BJ (cell line): ENCODE measurements at regions of chr1 and their contacts with region 1.

Region 1: DNA sequence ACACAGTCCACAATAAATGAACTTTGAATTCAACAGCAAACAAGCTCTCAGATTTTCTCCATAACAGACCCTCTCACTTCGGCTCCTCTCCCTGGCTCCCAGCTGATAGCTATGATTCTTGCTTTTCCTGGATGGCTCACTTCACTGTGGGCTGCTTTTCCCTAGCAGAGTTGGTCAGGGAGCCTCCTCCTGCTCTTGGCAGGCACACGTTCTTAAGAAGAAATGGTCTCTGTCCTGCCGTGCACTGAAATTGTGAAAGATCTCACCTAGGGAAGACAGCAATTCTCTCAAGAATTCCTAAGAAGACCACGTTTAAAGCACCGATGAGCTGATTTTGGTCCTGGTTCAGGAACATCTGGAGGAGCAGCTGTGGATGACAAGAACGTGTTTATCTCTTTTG is 148.5 kb upstream of the KCNK2 start:
- DNase-seq: no peak
- H3K4me3 ChIP-seq: no peak overlapping the region
- H3K27me3 ChIP-seq: no peaks in the 10 kb centered on the region
- CTCF ChIP-seq: no peak

Region 2: GRCh38 chr1:214901718-214902117 is 32.3 kb before region 1 on chr1:
- CTCF ChIA-PET with region 1: no interaction called
- POLR2A ChIA-PET with region 1: no interaction called
- DNase-seq: no peak
- H3K4me3 ChIP-seq: no peak overlapping the region
- H3K27me3 ChIP-seq: no peaks in the 10 kb centered on the region
- CTCF ChIP-seq: no peak

Region 3: DNA sequence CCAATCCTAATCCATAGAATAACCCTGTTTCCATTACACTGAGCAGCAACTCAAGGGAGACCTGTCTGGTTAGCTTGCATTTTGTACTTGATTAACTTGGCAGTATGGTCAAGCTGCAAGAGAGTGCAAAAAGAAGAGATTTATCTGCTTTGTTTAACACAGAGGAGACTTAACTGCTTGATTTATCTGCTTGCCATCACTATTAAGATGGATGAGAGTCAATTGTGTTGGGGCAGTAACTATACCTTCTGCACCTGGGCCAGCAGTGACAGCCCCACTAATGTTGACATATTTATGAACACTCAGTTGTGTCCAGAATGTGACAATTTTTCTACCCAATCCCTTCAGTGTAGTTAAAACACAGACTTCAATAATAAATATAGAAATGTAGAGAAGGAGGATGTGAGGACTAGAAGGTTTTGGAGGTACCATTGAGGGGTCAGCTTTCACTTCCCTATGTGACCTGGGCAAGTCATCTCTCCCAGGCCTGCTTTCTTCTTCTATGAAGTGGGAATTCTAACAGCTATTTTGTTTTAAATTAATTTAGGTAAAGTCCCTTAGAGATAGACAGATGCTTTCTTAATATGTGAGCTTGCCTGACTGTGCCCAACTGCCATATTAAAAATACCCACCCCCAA is 10.6 kb before region 1 on chr1:
- CTCF ChIA-PET with region 1: interaction called, 3 read pairs
- POLR2A ChIA-PET with region 1: interaction called, 11 read pairs
- DNase-seq: no peak
- H3K4me3 ChIP-seq: no peak overlapping the region
- H3K27me3 ChIP-seq: no peaks in the 10 kb centered on the region
- CTCF ChIP-seq: no peak